ENCODE measurements at regions of chr4 and their contacts with region 1.

Region 1: DNA sequence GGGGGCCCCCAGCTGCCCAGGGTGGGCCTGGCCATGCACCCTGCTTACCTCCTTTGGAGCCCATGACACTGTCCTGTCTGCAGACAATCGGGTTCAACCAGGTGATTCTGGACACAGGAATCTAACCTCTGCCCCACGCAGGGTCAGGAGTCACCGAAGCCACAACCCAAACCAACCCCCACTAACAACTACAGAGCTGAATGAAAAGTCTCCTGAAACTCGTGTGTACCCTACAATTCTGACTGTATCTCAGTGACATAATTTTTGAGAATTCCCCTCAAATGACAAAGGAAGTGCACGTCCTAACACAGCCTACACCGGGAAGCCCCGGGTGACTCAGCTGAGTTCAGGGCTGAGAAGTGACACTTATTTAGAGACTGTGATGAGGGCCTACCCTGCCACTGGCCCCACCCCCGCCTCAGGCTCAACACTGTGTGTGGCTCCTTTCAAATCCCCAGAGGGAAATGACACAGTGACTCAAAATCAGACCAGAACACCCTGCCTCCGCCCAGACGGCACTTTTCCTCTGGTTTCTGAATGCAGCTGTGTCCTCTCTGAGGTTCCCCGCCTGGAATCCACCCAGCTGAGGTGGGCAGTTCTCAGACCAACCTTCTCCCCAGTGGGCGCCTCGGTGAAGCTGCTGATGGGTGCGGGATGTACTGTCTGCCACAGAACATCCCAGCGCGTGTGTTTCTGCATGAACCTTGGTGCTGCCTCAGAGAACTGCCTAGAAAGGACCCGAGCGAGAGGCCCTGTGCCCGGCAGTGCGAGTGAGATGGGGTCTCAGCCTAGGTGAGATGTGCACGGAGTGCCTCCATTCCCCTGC is 9.9 kb downstream of the TNIP2 start:
- DNase-seq: peak; percentile 92
- H3K4me3 Mint-ChIP-seq: peak overlapping the region; percentile 79
- H3K27ac Mint-ChIP-seq: peak overlapping the region; percentile 96
- H3K4me1 Mint-ChIP-seq: peaks cover 60% of the 10 kb centered on the region
- H3K27me3 Mint-ChIP-seq: no peaks in the 10 kb centered on the region

Region 2: DNA sequence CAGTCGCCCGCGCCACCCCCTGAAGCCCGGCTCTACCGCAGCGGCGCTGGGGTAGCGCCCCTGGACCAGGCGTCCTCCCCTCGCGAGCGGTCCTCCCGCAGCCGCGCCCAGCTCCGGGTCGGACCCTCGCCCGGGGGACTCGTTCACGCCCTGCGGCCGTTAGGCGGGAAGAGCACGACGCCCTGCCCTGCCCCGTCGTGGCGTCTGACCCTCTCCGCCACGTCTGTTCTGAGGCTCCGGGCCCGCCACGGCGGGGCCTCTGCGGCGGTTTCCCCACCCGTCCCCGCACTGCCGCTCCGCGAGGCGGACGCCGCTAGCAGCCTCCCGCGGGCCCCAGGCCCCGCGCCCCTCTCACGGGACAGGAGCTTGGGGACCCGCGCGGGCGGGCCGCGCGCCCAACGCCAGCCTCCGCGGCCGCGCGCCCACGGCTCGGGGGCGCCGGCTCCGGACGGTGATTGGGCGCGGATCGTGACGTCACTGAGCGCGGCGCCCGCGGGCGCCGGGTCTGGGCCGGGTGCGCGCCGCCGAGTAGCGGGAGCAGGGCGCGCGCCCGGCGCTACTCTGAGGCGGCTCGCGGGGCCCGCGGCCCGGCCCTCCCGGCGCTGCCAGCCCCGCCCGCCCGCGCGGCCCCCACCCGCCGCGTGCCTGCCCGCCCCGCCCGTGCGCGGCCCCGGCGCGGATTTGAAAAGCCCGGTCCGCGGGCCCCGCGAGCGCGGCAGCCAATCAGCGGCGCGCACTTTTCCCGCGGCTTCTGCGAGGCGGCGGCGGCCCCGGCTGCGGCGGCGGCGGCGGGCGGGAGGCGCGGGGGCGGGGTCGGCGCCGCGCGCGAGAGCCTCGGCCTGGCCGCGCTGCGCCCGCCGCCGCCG is 875.4 kb before region 1 on chr4 and contains the start of gene NSD2:
- intact Hi-C with region 1: loop called (anchors 2 kb)
- DNase-seq: peak; percentile 89
- H3K4me3 Mint-ChIP-seq: peak within 1 kb of the TSS; percentile 100
- H3K27ac Mint-ChIP-seq: peak within 1 kb of the TSS; percentile 100
- H3K4me1 Mint-ChIP-seq: peaks cover 38% of the 10 kb centered on the region
- H3K27me3 Mint-ChIP-seq: peaks cover 1% of the 10 kb centered on the region
- total RNA-seq, gene NSD2: 200 and 202 TPM in 2 replicates

Region 3: DNA sequence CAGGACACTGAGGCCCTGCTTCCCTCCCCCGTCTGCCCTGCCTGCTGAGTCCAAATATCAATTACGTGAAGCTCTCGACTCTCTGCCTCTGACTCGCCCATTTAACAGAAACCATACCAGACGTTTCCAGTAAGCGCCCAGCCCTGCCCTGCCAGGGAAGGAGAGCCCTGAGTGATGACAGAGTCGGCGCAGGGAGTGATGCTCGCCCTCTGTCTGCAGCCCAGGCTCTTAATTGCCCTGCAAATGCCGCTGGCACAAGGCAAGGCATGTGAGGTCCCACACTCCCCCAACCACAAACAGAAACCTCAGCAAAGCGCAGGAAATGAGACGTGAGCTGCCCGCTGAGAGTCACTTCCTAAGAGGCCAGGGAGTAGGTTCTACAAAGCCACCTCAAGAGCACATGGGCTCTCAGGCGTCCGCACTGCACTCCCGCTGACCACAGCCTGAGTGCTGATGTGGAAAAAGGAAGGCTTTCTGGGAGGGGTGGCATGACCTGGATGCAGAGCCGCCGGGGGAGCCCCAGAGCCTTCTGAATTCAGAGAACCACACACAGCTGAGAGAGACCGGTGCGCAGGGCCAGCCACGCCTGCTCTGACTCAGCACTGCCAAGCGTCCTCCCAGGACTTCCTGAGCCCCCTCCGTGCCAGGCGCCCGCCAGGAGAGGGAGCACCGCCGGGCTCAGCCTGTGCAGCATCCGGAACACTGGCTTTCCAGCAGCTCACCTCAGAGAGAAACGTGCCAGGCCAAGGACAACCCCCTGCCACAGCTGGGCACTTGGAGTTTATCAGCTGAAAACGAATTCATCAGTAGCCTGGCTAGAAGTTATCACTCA is 333.1 kb before region 1 on chr4:
- intact Hi-C with region 1: loop called (anchors 1 kb)
- DNase-seq: peak; percentile 88
- H3K4me3 Mint-ChIP-seq: peak overlapping the region; percentile 64
- H3K27ac Mint-ChIP-seq: peak overlapping the region; percentile 93
- H3K4me1 Mint-ChIP-seq: peaks cover 69% of the 10 kb centered on the region
- H3K27me3 Mint-ChIP-seq: peaks cover 16% of the 10 kb centered on the region

Region 4: DNA sequence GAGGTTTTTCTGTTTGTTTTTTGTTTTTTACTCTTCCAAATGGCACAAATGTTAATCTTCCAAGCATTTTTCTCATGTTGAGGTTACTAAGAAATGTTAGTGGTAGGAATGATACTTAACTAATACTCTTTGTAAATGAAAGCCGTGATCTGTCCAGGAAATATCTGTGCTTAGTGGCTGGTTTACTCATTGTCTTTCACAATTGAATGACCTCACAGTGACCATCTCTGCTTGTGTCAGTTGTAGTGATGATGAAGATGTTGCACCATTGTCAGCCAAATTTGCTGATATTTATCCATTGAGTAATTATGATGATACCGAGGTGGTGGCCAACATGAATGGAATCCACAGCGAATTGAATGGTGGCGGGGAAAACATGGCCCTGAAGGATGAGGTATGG is 83.6 kb before region 1 on chr4:
- intact Hi-C with region 1: loop called (anchors 2 kb)
- DNase-seq: no peak
- H3K4me3 Mint-ChIP-seq: no peak overlapping the region
- H3K27ac Mint-ChIP-seq: no peak overlapping the region
- H3K4me1 Mint-ChIP-seq: peaks cover 16% of the 10 kb centered on the region
- H3K27me3 Mint-ChIP-seq: no peaks in the 10 kb centered on the region

Region 5: DNA sequence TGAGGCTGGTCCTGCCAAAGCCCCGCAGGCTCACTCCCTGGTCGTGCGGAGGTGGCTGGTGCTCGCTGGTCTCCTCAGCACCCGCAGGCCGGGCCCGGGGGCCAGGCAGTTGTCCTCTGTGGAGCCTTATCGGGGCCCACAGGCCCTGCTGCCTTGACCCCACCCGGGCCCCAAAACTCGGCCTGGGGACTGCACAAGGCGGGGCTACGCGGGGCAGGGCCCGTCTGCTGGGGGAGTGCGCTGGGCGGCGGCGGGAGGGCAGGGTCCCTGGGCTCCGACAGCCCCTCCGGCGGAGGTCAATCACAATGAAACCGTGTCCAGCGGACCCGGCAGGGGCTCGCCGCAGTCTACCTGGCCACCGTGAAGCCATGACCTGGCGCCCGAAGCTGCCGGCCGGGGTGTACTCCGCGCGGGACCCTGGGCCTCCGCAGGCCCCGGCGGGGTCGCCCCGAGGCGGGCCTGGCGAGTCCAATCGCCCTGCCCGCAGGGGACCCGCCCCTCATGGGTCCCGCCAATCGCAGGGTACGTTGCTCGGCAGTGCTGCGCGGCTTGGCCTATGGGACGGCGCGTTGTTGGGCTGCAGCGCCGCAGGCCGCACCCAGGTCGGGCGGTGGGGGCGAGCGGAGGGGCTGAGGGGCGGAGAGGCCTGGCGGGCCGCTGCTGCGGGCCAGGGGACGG is 97.2 kb after region 1 on chr4 and contains the start of gene ADD1:
- intact Hi-C with region 1: loop called (anchors 5 kb)
- DNase-seq: peak; percentile 97
- H3K4me3 Mint-ChIP-seq: peak within 1 kb of the TSS; percentile 95
- H3K27ac Mint-ChIP-seq: peak within 1 kb of the TSS; percentile 92
- H3K4me1 Mint-ChIP-seq: peaks cover 49% of the 10 kb centered on the region
- H3K27me3 Mint-ChIP-seq: no peaks in the 10 kb centered on the region
- total RNA-seq, gene ADD1: 200 and 203 TPM in 2 replicates

Region 6: DNA sequence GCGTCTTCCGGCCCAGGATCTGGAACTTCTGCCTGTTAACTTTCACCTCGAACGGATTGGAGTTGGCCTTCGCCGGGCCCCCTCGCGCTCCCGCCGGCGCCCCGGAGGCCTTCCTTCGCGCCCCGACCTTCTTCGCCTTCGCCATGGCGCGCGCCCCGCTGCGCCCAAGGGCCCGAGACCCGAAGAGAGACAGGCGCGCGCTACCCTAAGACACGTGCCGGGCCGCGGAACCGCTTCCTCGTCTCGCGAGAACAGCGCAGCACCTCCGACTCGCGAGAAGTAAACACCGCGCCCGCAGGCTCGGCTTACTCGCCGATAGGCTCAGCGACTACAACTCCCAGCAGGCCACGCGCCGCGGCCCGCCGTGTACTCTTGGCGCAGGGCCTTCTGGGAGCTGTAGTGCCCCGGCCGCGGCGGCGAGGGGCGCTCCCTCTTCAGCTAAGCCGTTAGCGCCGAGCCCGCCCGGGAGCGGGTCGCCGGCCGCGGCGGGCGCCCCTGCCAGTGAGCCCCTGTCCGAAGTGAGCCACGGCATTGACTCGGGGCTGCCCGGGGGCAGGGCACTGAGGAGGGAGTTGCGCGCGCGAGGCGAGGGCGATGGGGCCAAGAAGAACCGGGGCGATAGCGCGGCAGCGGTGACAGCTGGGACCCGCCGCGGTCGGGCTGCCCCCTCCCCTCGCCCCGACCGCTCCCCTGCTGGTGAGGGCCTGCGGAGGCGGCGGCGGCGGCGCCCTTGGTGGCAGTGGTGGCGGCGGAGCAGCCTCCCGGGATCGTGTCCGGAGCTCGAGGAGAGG is 217.2 kb after region 1 on chr4 and contains the starts of genes GRK4 and NOP14:
- intact Hi-C with region 1: loop called (anchors 1 kb)
- DNase-seq: peak; percentile 96
- H3K4me3 Mint-ChIP-seq: peak within 1 kb of the TSS; percentile 97
- H3K27ac Mint-ChIP-seq: peak within 1 kb of the TSS; percentile 92
- H3K4me1 Mint-ChIP-seq: peaks cover 28% of the 10 kb centered on the region
- H3K27me3 Mint-ChIP-seq: no peaks in the 10 kb centered on the region
- total RNA-seq, gene GRK4: 4.4 and 4.5 TPM in 2 replicates
- total RNA-seq, gene NOP14: 140 and 142 TPM in 2 replicates

Measured in activated T-helper 1 cell treated with anti-CD3 and anti-CD28 coated beads, Interleukin-12 subunit alpha, Interleukin-12 subunit beta, Interleukin-2, Interleukin-4 antibody, amounts not matched to agents 30 ng/mL and 10 ng/mL and 1 ng/mL, durations not matched to agents 14 hours and 24 hours and 36 hours (primary cell).